ENCODE measurements at regions of chr18 and their contacts with region 1.

Region 1: GRCh38 chr18:13216092-13216582 is 2.4 kb upstream of the LDLRAD4 start:
- DNase-seq: peak; percentile 79
- ATAC-seq: peak; percentile 70
- H3K4me3 Mint-ChIP-seq: peak overlapping the region; percentile 77
- H3K27ac Mint-ChIP-seq: no peak overlapping the region
- H3K4me1 Mint-ChIP-seq: peaks cover 27% of the 10 kb centered on the region
- H3K27me3 Mint-ChIP-seq: peaks cover 15% of the 10 kb centered on the region

Region 2: GRCh38 chr18:13289481-13290205 is 73.5 kb after region 1 on chr18:
- CTCF ChIA-PET with region 1: interaction called, 6 read pairs
- POLR2A ChIA-PET with region 1: no interaction called
- intact Hi-C with region 1: loop called (anchors 2 to 5 kb)
- DNase-seq: no peak
- ATAC-seq: no peak
- H3K4me3 Mint-ChIP-seq: no peak overlapping the region
- H3K27ac Mint-ChIP-seq: peak overlapping the region; percentile 48
- H3K4me1 Mint-ChIP-seq: peaks cover 52% of the 10 kb centered on the region
- H3K27me3 Mint-ChIP-seq: no peaks in the 10 kb centered on the region

Region 3: DNA sequence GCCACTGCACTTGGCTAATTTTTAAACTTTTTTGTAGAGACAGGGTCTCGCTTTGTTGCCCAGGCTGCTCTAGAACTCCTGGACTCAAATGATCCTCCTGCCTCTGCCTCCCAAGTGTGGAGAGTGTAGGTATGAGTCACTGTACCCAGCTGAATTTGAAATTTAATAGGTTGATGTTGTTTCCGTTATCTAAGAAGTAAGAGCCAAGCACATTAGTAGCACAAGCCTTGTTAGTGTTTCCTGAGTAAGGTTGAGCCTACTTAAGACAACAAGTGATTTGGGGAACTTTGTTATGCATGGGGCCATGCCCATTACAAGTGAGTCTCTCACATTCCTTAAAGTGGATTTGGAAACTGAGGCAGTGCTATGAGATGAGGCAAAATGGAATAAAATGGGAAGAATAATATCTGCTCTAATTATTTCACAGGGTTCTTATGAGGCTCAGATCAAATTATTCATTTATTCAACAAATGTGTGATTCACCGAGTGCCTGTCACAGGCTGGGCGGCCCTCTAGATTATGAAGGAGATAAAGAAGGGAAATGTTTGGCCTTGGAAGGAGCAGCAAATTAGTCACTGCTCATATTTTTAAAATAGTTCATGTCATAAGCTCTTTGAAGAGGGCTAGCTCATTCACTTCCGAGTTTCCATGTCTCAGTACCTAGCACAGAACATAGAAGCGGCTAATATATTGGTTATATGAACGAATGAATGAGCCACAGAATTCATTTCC is 219.6 kb after region 1 on chr18:
- CTCF ChIA-PET with region 1: interaction called, 9 read pairs
- POLR2A ChIA-PET with region 1: interaction called, 3 read pairs
- intact Hi-C with region 1: loop called (anchors 2 kb)
- DNase-seq: peak; percentile 23
- ATAC-seq: no peak
- H3K4me3 Mint-ChIP-seq: no peak overlapping the region
- H3K27ac Mint-ChIP-seq: peak overlapping the region; percentile 86
- H3K4me1 Mint-ChIP-seq: peaks cover 67% of the 10 kb centered on the region
- H3K27me3 Mint-ChIP-seq: no peaks in the 10 kb centered on the region

Region 4: GRCh38 chr18:13464432-13465123 is 248.4 kb after region 1 on chr18:
- CTCF ChIA-PET with region 1: interaction called, 8 read pairs
- POLR2A ChIA-PET with region 1: no interaction called
- intact Hi-C with region 1: loop called (anchors 2 to 5 kb)
- DNase-seq: peak; percentile 79
- ATAC-seq: peak; percentile 91
- H3K4me3 Mint-ChIP-seq: peak overlapping the region; percentile 83
- H3K27ac Mint-ChIP-seq: peak overlapping the region; percentile 92
- H3K4me1 Mint-ChIP-seq: peaks cover 51% of the 10 kb centered on the region
- H3K27me3 Mint-ChIP-seq: no peaks in the 10 kb centered on the region

Region 5: GRCh38 chr18:13539050-13539449 is 322.9 kb after region 1 on chr18:
- CTCF ChIA-PET with region 1: interaction called, 7 read pairs
- POLR2A ChIA-PET with region 1: no interaction called
- intact Hi-C with region 1: loop called in 1 of 2 experiments (anchors 5 kb)
- DNase-seq: peak; percentile 39
- ATAC-seq: peak; percentile 70
- H3K4me3 Mint-ChIP-seq: no peak overlapping the region
- H3K27ac Mint-ChIP-seq: peak overlapping the region; percentile 79
- H3K4me1 Mint-ChIP-seq: peaks cover 61% of the 10 kb centered on the region
- H3K27me3 Mint-ChIP-seq: no peaks in the 10 kb centered on the region

Region 6: DNA sequence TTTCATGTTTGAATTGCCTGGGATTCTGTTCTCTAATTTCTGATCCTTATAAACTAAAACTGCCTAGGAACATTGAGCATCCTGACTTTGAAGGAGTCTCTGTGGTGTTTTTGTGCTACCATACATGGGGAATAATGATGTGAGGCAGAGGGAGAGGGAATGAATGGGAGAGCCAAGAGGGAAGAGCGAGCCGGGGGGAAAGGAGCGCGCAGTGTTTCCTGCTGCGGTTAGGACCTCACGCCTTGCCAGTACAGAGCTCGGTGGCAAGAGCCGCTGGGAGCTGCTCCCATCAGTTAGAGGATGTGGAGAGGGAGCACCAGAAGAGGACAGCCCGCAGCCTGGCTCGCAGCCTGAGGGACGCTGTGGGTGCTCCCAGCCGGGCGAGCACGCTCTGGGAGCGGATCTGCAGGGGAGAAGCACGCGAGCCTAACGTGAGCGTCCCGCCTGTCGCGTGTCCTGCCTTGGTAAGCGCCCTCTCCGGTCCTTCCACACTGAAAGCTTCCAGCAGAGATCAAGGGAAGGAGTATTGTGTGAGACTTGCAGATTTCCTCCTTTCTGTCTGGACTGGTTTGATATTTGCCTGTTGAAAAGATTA is 395.6 kb after region 1 on chr18:
- CTCF ChIA-PET with region 1: interaction called, 4 read pairs
- POLR2A ChIA-PET with region 1: no interaction called
- intact Hi-C with region 1: loop called (anchors 2 to 10 kb)
- DNase-seq: peak; percentile 46
- ATAC-seq: peak; percentile 4
- H3K4me3 Mint-ChIP-seq: peak overlapping the region; percentile 72
- H3K27ac Mint-ChIP-seq: peak overlapping the region; percentile 87
- H3K4me1 Mint-ChIP-seq: peaks cover 84% of the 10 kb centered on the region
- H3K27me3 Mint-ChIP-seq: no peaks in the 10 kb centered on the region

Region 7: GRCh38 chr18:13800505-13801259 is 584.5 kb after region 1 on chr18:
- CTCF ChIA-PET with region 1: no interaction called
- POLR2A ChIA-PET with region 1: no interaction called
- intact Hi-C with region 1: loop called in 1 of 2 experiments (anchors 1 kb)
- DNase-seq: peak; percentile 80
- ATAC-seq: peak; percentile 99
- H3K4me3 Mint-ChIP-seq: peak overlapping the region; percentile 48
- H3K27ac Mint-ChIP-seq: no peak overlapping the region
- H3K4me1 Mint-ChIP-seq: peaks cover 5% of the 10 kb centered on the region
- H3K27me3 Mint-ChIP-seq: peaks cover 51% of the 10 kb centered on the region

Region 8: DNA sequence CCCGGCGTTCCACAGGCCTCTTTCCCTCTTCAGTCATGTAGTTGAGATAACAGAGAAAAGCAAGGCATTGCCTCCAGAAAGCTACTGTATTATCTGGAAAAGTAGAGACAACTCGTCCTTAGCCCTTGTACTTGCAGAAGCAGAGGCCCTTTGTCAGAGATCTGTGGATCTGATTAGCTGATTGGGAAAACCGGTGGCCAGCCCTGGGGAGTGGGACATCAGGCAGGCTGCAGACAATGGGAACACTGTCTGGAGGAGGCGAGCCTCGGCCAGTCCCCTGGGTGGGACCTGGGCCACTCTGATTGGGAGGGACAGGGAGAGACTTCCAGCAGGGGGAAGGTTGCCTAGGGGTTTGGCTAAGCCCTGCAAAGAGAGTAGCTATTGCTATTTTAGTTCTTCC is 700.4 kb after region 1 on chr18:
- CTCF ChIA-PET with region 1: no interaction called
- POLR2A ChIA-PET with region 1: no interaction called
- intact Hi-C with region 1: no loop called
- DNase-seq: no peak
- ATAC-seq: no peak
- H3K4me3 Mint-ChIP-seq: no peak overlapping the region
- H3K27ac Mint-ChIP-seq: no peak overlapping the region
- H3K4me1 Mint-ChIP-seq: no peaks in the 10 kb centered on the region
- H3K27me3 Mint-ChIP-seq: no peaks in the 10 kb centered on the region

Measured in activated CD4-positive, alpha-beta T cell treated with anti-CD3 and anti-CD28 coated beads for 36 hours (primary cell).